ENCODE measurements at regions of chr3 and their contacts with region 1.

Region 1: DNA sequence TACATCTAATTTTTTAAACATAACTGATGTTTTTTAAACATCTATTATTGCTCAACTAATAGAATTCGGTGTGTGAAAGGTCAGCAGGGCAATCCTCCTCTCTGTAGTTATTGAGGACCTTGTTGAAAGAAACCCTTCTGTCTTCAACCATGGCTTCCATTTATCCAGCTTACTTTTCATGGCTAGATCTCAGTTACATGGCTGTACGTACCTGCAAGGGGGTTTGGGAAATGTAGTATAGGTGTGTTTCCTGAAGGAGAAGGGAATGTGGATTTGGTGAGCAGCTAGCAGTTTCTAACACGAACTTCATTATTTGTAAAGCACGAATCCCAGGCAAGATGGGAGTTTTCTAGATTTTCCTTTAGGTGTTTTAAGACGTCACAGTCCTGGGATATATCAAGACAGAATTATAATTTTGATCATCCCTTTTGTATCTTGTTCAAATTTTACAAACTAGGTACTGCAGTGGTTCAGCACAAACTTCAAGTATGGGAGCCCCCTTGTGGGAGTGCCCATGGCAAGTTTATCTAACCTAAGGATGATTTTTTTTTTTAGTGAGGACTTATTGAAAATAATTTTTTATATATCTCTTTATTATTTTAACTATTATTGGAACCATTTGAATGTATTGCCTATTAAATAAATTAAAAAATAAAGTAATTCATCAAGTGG is 41.6 kb downstream of the FBXL2 start:
- DNase-seq: peak; percentile 60
- H3K4me3 ChIP-seq: no peak overlapping the region
- H3K27ac ChIP-seq: peak overlapping the region; percentile 85
- H3K4me1 ChIP-seq: peaks cover 58% of the 10 kb centered on the region
- H3K27me3 ChIP-seq: no peaks in the 10 kb centered on the region
- CTCF ChIP-seq: peak; percentile 12 to 15
- POLR2A ChIP-seq: no peak

Region 2: GRCh38 chr3:33113772-33114621 is 204.8 kb before region 1 on chr3 and contains the start of gene CRTAP:
- CTCF ChIA-PET with region 1: no interaction called
- POLR2A ChIA-PET with region 1: no interaction called
- dilution Hi-C with region 1: no loop called
- intact Hi-C with region 1: loop called (anchors 5 kb)
- DNase-seq: peak; percentile 98
- H3K4me3 ChIP-seq: peak within 1 kb of the TSS; percentile 55 to 70 (median 67)
- H3K27ac ChIP-seq: peak within 1 kb of the TSS; percentile 28
- H3K4me1 ChIP-seq: peaks cover 19% of the 10 kb centered on the region
- H3K27me3 ChIP-seq: no peaks in the 10 kb centered on the region
- CTCF ChIP-seq: no peak
- POLR2A ChIP-seq: peak; percentile 78
- total RNA-seq, gene CRTAP: 198 and 204 TPM in 2 replicates

Region 3: DNA sequence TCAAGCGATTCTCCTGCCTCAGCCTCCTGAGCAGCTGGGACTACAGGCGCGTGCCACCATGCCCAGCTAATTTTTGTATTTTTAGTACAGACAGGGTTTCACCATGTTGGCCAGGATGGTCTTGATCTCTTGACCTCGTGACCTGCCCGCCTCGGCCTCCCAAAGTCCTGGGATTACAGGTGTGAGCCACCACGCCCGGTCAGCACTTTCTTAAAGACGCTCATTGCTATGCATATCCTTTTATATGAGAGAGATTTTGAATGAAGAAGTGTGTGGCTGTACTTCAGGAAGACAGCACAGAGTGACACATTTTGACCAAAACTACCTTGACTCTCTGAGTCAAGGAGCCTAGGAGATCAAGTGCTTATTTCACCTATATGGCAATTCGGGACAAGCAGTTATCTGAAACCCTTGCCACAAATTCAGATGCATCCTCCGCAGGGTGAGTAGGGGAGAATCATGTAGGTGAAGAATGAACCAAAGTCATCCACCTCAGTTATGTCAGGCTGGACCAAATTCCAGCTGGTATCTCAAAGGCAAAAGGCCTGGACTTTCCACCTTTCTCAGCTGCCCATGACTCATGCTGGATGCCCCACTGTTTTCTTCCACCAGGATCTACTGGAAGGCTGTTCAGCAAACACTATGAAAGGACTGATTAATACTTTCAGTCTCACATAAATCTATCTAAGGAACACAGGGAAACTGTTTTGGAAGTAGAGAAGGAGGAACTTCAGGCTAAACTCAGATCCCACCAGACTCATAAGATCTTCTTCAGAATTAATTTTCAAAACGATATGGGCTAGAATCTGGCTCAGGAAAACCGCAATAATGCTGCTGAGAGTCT is 132.1 kb before region 1 on chr3:
- CTCF ChIA-PET with region 1: interaction called, 3 read pairs
- POLR2A ChIA-PET with region 1: no interaction called
- dilution Hi-C with region 1: no loop called
- intact Hi-C with region 1: loop called (anchors 1 kb)
- DNase-seq: peak; percentile 93
- H3K4me3 ChIP-seq: peak overlapping the region in 1 of 3 experiments; percentile 28
- H3K27ac ChIP-seq: peak overlapping the region; percentile 92
- H3K4me1 ChIP-seq: peaks cover 11% of the 10 kb centered on the region
- H3K27me3 ChIP-seq: no peaks in the 10 kb centered on the region
- CTCF ChIP-seq: no peak
- POLR2A ChIP-seq: no peak

Region 4: DNA sequence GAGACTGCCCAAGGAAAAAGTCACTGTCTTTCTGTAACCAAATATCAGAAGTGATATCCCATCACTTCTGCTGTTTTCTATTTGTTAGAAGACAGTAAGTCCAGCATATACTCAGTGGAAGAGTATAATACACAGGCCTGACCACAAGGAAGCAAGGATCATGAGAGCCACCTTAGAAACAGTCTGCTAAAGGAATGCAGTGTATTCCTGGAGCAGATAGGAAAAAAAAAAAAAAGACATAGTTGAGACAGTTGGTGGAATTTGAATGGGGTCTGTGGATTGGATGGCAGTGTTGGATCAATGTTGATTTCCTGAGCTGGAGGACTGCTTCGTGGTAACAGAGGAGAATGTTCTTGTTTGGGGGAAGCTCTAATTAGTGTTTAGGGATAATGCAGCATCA is 68.1 kb before region 1 on chr3:
- CTCF ChIA-PET with region 1: interaction called, 3 read pairs
- POLR2A ChIA-PET with region 1: no interaction called
- dilution Hi-C with region 1: no loop called
- intact Hi-C with region 1: loop called (anchors 2 kb)
- DNase-seq: no peak
- H3K4me3 ChIP-seq: no peak overlapping the region
- H3K27ac ChIP-seq: no peak overlapping the region
- H3K4me1 ChIP-seq: no peaks in the 10 kb centered on the region
- H3K27me3 ChIP-seq: no peaks in the 10 kb centered on the region
- CTCF ChIP-seq: no peak
- POLR2A ChIP-seq: no peak

Region 5: DNA sequence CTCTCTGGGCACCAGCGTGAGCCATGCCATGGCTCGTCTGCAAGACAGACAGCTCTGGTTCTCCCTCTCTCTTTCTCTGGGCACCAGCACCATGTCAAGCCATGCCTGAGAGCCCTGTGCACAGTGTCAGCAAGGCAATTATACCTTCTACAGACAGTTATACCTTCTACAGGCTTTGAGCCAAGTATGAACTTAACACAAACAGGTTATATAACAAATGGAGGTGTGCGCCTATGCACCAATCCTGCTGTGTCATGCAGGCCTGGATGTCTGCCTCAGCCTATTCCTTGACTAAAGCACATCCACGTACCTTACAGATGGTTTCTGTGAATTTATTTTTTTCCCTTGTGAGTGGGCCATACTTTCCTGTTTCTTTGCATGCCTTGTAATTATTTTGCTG is 47.5 kb before region 1 on chr3:
- CTCF ChIA-PET with region 1: no interaction called
- POLR2A ChIA-PET with region 1: no interaction called
- dilution Hi-C with region 1: no loop called
- intact Hi-C with region 1: no loop called
- DNase-seq: no peak
- H3K4me3 ChIP-seq: no peak overlapping the region
- H3K27ac ChIP-seq: no peak overlapping the region
- H3K4me1 ChIP-seq: no peaks in the 10 kb centered on the region
- H3K27me3 ChIP-seq: no peaks in the 10 kb centered on the region
- CTCF ChIP-seq: no peak
- POLR2A ChIP-seq: no peak

Region 6: GRCh38 chr3:33299395-33300081 is 19.3 kb before region 1 on chr3:
- CTCF ChIA-PET with region 1: interaction called, 10 read pairs
- POLR2A ChIA-PET with region 1: no interaction called
- dilution Hi-C with region 1: no loop called
- intact Hi-C with region 1: no loop called
- DNase-seq: no peak
- H3K4me3 ChIP-seq: no peak overlapping the region
- H3K27ac ChIP-seq: no peak overlapping the region
- H3K4me1 ChIP-seq: peaks cover 5% of the 10 kb centered on the region
- H3K27me3 ChIP-seq: no peaks in the 10 kb centered on the region
- CTCF ChIP-seq: no peak
- POLR2A ChIP-seq: no peak

Region 7: GRCh38 chr3:33440323-33441232 is 121.7 kb after region 1 on chr3 and contains the start of gene UBP1:
- CTCF ChIA-PET with region 1: no interaction called
- POLR2A ChIA-PET with region 1: no interaction called
- dilution Hi-C with region 1: no loop called
- intact Hi-C with region 1: loop called (anchors 5 kb)
- DNase-seq: peak; percentile 99
- H3K4me3 ChIP-seq: peak within 1 kb of the TSS; percentile 98 to 99 (median 98)
- H3K27ac ChIP-seq: peak within 1 kb of the TSS; percentile 86
- H3K4me1 ChIP-seq: peaks cover 23% of the 10 kb centered on the region
- H3K27me3 ChIP-seq: no peaks in the 10 kb centered on the region
- CTCF ChIP-seq: peak in 1 of 2 donors; percentile 16
- POLR2A ChIP-seq: peak; percentile 95
- total RNA-seq, gene UBP1: 89.7 and 90.5 TPM in 2 replicates